Activated naive CD4-positive, alpha-beta T cell treated with anti-CD3 and anti-CD28 coated beads for 36 hours (primary cell): ENCODE measurements at regions of chr6 and their contacts with region 1.

Region 1: DNA sequence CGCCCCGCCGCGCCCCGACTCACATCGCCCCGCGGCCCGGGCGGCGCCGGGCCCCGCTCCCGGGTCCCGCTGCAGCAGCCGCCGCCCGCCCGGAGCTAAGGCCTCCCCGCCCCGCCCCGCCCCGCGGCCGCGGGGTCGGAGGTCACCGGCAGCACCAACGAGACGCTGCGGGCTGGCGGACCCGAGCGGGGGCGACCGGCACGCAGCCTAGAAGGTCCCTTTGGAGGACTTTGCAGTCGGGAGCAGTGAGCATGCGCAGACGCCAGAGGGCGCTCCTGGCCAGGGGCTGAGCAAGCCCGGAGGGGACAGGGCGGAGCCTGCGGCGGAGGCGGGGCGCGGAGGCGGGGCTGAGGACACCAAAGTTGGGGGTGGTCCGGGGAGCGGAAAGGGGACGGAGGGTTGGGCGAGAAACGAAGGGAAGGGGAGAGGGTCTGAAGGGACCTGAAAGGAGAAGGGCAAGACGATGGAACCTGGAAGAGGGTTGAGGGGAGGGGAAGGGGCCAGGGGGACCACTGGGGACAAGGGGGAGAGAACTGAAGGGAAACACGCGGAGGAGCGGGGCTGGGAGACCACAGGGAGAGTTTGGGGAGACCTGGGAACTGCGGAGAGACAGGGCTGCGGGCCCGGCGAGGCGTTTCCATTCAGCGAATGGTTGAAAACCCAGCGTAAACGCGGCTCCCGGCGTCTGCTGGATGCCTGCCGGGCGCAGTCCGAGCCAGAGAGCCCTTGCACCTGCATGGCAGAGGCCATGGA is at the start of gene FRS3:
- DNase-seq: peak; percentile 99
- H3K4me3 Mint-ChIP-seq: peak within 1 kb of the TSS; percentile 82
- H3K27ac Mint-ChIP-seq: no peak within 1 kb of the TSS
- H3K4me1 Mint-ChIP-seq: peaks cover 11% of the 10 kb centered on the region
- H3K27me3 Mint-ChIP-seq: peaks cover 4% of the 10 kb centered on the region
- total RNA-seq, gene FRS3: 4.0 to 4.2 TPM

Region 2: DNA sequence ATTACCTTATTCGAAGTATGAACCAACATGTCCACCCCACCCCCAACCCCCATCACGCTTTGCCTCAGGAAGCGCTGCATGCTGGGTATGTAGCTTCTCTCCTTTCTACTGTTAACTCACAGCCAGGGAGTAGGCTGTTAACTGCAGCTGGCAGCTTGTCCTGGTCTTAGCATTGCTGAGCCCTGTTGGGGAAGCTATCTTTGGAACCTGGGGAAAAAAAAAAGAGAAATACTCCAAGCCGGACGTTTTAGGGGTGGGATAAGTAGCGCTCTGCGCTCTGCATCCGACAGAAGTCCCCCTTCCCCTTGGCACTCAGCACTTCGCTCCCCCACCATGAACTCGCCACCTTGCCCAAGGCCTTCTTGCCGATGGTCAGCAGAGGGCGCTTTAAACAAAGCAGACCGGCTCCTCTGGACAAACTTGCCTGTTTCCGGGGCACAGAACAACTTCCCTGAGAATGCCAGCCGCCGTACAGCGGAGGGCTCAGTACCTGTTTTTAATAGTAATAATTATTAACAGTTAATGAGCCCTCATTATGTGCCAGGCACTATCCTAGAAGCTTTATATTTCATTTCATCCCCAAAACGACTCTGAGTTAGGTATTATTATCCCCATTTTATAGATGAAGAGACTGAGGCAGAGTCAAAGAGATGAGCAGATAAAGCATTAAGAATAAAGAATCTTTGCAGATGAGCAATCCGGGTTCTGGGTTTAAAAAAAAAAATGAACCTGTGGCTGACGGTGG is 176.9 kb before region 1 on chr6:
- CTCF ChIA-PET with region 1: no interaction called
- intact Hi-C with region 1: loop called (anchors 1 kb)
- DNase-seq: peak; percentile 90
- H3K4me3 Mint-ChIP-seq: no peak overlapping the region
- H3K27ac Mint-ChIP-seq: no peak overlapping the region
- H3K4me1 Mint-ChIP-seq: peaks cover 4% of the 10 kb centered on the region
- H3K27me3 Mint-ChIP-seq: no peaks in the 10 kb centered on the region

Region 3: DNA sequence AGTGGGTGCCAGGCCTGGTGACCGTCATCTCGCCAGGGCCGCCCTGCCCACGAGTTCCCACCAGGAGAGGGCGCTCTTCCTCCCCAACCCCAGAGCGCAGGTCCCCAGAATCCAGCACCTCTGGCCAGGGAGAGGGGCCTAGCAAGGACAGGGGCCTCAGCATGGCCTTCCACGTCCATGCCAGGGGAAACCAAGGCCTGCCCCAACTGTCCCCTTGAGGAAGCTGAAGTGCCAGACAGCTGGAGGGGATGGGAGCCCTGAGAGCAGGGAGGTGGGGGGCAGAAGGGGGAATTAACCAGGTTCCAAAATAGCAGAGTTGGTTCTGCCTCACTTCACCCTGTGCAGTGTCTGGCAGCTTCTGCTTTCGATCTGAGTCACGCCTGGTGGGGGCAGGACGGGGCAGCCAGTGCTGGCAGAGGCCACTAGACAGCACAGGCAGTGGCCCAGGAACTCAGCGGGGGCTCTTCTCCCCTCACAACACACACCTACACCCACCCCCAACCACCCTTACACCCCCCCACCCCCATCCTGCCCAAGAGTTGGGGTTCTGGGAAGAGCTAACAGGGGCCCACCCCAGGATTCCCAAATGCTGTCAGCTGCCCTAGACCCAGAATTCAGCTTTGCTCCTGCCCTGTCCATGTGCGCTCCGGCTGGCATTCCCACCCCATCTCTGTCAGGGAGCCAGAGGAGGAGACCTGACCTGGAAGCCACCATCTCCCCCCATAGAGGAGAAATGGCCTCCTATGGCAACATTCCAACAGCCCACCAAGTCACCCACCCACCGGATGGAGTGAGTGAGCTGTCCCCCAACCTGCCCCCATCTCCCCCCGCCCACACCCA is 73.8 kb before region 1 on chr6:
- CTCF ChIA-PET with region 1: interaction called, 7 read pairs
- intact Hi-C with region 1: loop called (anchors 1 kb)
- DNase-seq: peak; percentile 88
- H3K4me3 Mint-ChIP-seq: peak overlapping the region; percentile 26
- H3K27ac Mint-ChIP-seq: peak overlapping the region; percentile 87
- H3K4me1 Mint-ChIP-seq: peaks cover 29% of the 10 kb centered on the region
- H3K27me3 Mint-ChIP-seq: no peaks in the 10 kb centered on the region

Region 4: DNA sequence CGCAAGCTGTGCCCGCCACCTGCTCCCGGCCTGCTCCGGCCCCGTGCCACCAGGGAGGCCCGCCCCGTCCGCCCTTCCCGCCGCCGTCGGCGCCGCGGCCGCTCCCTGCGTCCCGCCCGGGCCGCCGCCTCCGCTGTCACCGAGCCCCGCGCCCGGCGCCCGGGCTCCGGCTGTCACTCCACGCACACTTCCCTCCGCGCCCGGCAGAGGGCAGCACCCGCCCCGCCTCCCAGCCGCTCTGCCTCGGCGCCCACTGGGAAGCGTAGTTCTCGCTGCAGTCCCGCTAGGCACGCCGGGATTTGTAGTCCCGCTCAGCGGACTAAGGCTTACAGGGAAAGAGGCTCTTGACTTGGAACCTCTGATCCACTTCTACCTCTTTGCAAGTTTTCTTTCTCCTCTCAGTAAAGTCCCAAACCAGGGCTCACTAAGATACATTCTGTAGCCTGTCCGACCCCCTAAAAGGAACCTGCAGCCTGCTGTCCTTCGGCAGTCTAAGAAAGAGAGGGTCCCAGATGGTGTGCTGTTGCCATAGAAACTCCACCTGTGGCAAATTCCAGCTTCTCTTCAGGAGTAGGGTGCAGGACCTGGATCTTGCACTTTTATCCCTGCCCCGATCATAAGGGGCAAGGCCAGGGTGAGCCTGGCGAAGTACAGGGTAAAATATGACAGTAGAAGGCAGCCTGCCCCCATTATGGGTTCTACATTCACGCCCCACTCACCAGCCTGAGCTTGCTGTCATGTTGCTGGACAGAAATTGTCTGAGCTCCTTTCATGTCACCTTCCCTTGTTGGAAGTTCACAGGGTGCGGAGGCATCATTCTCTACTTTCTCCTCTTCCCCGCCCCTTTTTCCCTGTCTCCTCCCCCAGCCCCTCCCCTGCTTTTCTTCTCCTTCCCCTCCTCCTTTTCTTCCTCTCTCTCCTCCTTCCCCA is 44.3 kb before region 1 on chr6 and contains the start of gene TFEB:
- CTCF ChIA-PET with region 1: interaction called, 3 read pairs
- intact Hi-C with region 1: loop called (anchors 1 kb)
- DNase-seq: peak; percentile 96
- H3K4me3 Mint-ChIP-seq: peak within 1 kb of the TSS; percentile 72
- H3K27ac Mint-ChIP-seq: no peak within 1 kb of the TSS
- H3K4me1 Mint-ChIP-seq: peaks cover 21% of the 10 kb centered on the region
- H3K27me3 Mint-ChIP-seq: no peaks in the 10 kb centered on the region
- total RNA-seq, gene TFEB: 5.7 to 7.9 TPM

Region 5: GRCh38 chr6:41846666-41847237 is 66.8 kb after region 1 on chr6:
- CTCF ChIA-PET with region 1: no interaction called
- intact Hi-C with region 1: loop called (anchors 1 kb)
- DNase-seq: peak; percentile 81
- H3K4me3 Mint-ChIP-seq: no peak overlapping the region
- H3K27ac Mint-ChIP-seq: no peak overlapping the region
- H3K4me1 Mint-ChIP-seq: peaks cover 5% of the 10 kb centered on the region
- H3K27me3 Mint-ChIP-seq: no peaks in the 10 kb centered on the region